MCF 10A (cell line): ENCODE measurements at regions of chr4 and their contacts with region 1.

Region 1: DNA sequence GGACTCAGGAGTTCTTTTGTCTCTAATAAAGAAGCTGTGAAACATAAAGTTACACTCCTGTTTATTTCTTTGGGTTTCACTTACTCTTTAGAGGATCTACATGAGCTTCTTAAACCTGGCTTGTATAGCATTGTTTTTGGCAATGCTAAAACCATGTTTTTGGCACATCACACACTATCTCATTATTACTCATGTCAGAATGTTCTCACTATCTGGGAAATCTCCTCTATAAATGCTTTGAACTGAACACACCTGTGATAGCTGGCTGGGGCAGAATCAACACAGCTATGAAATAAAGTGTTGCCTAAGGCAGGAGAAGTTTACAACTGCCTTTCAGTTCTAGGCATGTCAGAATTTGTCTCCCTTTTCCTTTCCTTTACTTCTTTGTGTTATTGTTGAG is 52.6 kb downstream of the SULT1B1 start:
- DNase-seq: peak; percentile 79
- H3K4me3 Mint-ChIP-seq: peak overlapping the region; percentile 6
- H3K27ac Mint-ChIP-seq: peak overlapping the region; percentile 46
- H3K4me1 Mint-ChIP-seq: peaks cover 17% of the 10 kb centered on the region
- H3K27me3 Mint-ChIP-seq: no peaks in the 10 kb centered on the region
- CTCF ChIP-seq: no peak

Region 2: GRCh38 chr4:69330345-69331047 is 377.3 kb before region 1 on chr4:
- CTCF ChIA-PET with region 1: no interaction called
- POLR2A ChIA-PET with region 1: no interaction called
- intact Hi-C with region 1: no loop called
- DNase-seq: no peak
- H3K4me3 Mint-ChIP-seq: no peak overlapping the region
- H3K27ac Mint-ChIP-seq: no peak overlapping the region
- H3K4me1 Mint-ChIP-seq: no peaks in the 10 kb centered on the region
- H3K27me3 Mint-ChIP-seq: peaks cover 15% of the 10 kb centered on the region
- CTCF ChIP-seq: no peak

Region 3: DNA sequence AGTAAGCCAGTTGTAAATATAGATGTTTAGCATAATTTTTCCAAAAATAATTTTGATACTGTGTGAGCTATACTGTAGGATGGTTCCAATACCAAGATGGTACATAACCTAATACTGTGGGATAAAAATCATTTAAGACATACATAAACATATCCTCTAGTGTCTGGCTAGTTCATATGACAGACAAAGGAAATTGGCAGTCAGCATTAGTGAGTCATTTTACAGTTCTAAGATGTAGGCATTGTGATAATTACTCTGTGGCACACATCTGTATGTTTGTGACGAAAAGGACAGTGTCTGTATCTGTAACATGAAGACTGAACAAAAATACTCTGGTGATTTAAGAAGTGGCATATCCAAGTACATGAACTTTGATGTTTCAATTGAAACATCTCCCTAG is 117.9 kb before region 1 on chr4:
- CTCF ChIA-PET with region 1: no interaction called
- POLR2A ChIA-PET with region 1: no interaction called
- intact Hi-C with region 1: no loop called
- DNase-seq: peak; percentile 19
- H3K4me3 Mint-ChIP-seq: no peak overlapping the region
- H3K27ac Mint-ChIP-seq: no peak overlapping the region
- H3K4me1 Mint-ChIP-seq: no peaks in the 10 kb centered on the region
- H3K27me3 Mint-ChIP-seq: peaks cover 83% of the 10 kb centered on the region
- CTCF ChIP-seq: no peak

Region 4: DNA sequence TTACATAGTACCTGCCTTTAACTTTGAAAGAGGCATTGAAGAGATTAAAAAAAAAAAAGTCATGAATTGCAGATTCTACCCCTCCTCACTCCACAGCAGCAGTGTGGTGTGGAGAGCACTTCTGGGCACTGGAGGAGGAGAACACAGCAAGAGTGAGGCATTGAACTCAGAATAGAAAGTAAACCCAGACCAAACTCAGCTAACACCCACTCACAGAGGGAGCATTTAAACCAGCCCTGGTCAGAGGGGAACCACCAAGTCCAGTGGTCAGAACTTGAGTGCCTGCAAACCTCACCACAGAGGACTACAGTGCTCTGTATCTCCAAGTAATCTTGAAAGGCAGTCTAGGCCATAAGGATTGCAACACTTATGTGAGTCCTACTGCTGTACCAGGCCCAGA is 39.1 kb before region 1 on chr4:
- CTCF ChIA-PET with region 1: no interaction called
- POLR2A ChIA-PET with region 1: no interaction called
- intact Hi-C with region 1: no loop called
- DNase-seq: no peak
- H3K4me3 Mint-ChIP-seq: no peak overlapping the region
- H3K27ac Mint-ChIP-seq: no peak overlapping the region
- H3K4me1 Mint-ChIP-seq: no peaks in the 10 kb centered on the region
- H3K27me3 Mint-ChIP-seq: peaks cover 23% of the 10 kb centered on the region
- CTCF ChIP-seq: no peak

Region 5: GRCh38 chr4:69718396-69719253 is 10.8 kb after region 1 on chr4:
- CTCF ChIA-PET with region 1: no interaction called
- POLR2A ChIA-PET with region 1: interaction called, 10 read pairs
- intact Hi-C with region 1: no loop called
- DNase-seq: peak; percentile 45
- H3K4me3 Mint-ChIP-seq: peak overlapping the region; percentile 43
- H3K27ac Mint-ChIP-seq: peak overlapping the region; percentile 77
- H3K4me1 Mint-ChIP-seq: peaks cover 23% of the 10 kb centered on the region
- H3K27me3 Mint-ChIP-seq: no peaks in the 10 kb centered on the region
- CTCF ChIP-seq: no peak

Region 6: DNA sequence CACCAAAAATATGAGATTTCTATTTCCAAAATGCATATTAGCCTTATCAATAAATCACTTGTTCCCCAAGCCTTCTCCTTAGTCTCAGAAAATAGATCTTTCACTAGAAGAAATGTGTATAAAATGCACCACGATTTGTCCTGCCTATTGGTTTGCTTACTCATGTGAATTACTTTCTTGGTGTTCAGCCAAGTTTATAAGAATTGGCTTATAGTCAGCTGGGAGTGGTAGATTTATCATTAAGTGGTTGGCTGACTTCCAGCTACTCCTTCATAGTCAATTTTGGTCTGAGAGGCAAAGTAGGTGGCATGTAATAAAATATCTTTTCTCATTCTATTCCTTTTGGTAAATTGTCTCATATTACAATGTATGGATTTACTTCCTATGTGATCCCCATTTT is 150.9 kb after region 1 on chr4:
- CTCF ChIA-PET with region 1: no interaction called
- POLR2A ChIA-PET with region 1: interaction called, 14 read pairs
- intact Hi-C with region 1: no loop called
- DNase-seq: peak; percentile 81
- H3K4me3 Mint-ChIP-seq: no peak overlapping the region
- H3K27ac Mint-ChIP-seq: no peak overlapping the region
- H3K4me1 Mint-ChIP-seq: no peaks in the 10 kb centered on the region
- H3K27me3 Mint-ChIP-seq: no peaks in the 10 kb centered on the region
- CTCF ChIP-seq: no peak